Mammary epithelial cell (primary cell): ENCODE measurements at regions of chr4 and their contacts with region 1.

Region 1: GRCh38 chr4:109548655-109549054 is 11.4 kb upstream of the MCUB start:
- DNase-seq: peak; percentile 92
- H3K4me3 ChIP-seq: no peak overlapping the region
- H3K27ac ChIP-seq: peak overlapping the region; percentile 63
- H3K4me1 ChIP-seq: peaks cover 20% of the 10 kb centered on the region
- H3K27me3 ChIP-seq: no peaks in the 10 kb centered on the region
- CTCF ChIP-seq: no peak

Region 2: GRCh38 chr4:109444182-109444844 is 104.3 kb before region 1 on chr4:
- CTCF ChIA-PET with region 1: no interaction called
- dilution Hi-C with region 1: no loop called
- in situ Hi-C with region 1: no loop called
- intact Hi-C with region 1: loop called (anchors 5 kb)
- DNase-seq: no peak
- H3K4me3 ChIP-seq: no peak overlapping the region
- H3K27ac ChIP-seq: no peak overlapping the region
- H3K4me1 ChIP-seq: peaks cover 41% of the 10 kb centered on the region
- H3K27me3 ChIP-seq: no peaks in the 10 kb centered on the region
- CTCF ChIP-seq: no peak

Region 3: DNA sequence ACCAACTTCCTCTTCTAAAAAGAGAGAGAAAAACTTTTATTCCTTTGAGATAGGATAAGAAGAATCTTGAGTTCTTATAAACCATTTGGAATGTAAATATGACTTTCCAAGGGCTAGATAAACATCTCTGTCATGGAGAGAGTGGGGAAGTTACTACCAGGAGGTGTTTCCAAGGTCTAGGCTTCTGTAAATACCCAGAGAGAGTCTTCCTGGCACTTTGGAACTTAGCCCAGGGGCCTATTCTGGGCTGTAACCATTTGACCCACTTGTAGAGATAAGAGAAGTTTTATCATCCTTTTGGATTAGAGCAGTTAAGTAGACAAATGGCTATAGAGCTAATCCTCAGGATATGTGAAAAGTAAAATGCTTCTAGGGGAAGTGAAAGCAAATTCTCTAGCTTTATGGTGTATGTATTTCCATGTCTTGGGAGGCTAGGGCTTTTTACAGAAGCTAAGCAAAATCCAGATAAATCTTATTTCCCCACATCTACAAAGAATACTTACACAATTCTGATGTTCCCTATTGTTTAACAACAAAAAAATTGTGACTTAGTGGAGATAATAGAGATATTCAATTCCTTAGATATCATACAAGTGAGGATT is 62.5 kb after region 1 on chr4:
- CTCF ChIA-PET with region 1: no interaction called
- dilution Hi-C with region 1: no loop called
- in situ Hi-C with region 1: no loop called
- intact Hi-C with region 1: no loop called
- DNase-seq: no peak
- H3K4me3 ChIP-seq: no peak overlapping the region
- H3K27ac ChIP-seq: no peak overlapping the region
- H3K4me1 ChIP-seq: no peaks in the 10 kb centered on the region
- H3K27me3 ChIP-seq: no peaks in the 10 kb centered on the region
- CTCF ChIP-seq: no peak

Region 4: GRCh38 chr4:109967797-109968507 is 419.3 kb after region 1 on chr4:
- CTCF ChIA-PET with region 1: no interaction called
- dilution Hi-C with region 1: no loop called
- in situ Hi-C with region 1: loop called in 1 of 2 experiments (anchors 25 kb)
- intact Hi-C with region 1: loop called (anchors 10 kb)
- DNase-seq: peak; percentile 86
- H3K4me3 ChIP-seq: no peak overlapping the region
- H3K27ac ChIP-seq: peak overlapping the region; percentile 28
- H3K4me1 ChIP-seq: peaks cover 23% of the 10 kb centered on the region
- H3K27me3 ChIP-seq: no peaks in the 10 kb centered on the region
- CTCF ChIP-seq: no peak